ENCODE measurements at regions of chr22 and their contacts with region 1.

Region 1: GRCh38 chr22:23402275-23403151 is 177.6 kb downstream of the IGLL1 start:
- DNase-seq: peak; percentile 52 to 59 (median 57)
- ATAC-seq: peak; percentile 62 to 77 (median 74)
- H3K4me3 ChIP-seq: peak overlapping the region; percentile 14 to 33 (median 18)
- H3K27ac ChIP-seq: no peak overlapping the region
- H3K4me1 ChIP-seq: no peaks in the 10 kb centered on the region
- H3K27me3 ChIP-seq: no peaks in the 10 kb centered on the region
- CTCF ChIP-seq: peak; percentile 20 to 55 (median 42)
- POLR2A ChIP-seq: no peak

Region 2: DNA sequence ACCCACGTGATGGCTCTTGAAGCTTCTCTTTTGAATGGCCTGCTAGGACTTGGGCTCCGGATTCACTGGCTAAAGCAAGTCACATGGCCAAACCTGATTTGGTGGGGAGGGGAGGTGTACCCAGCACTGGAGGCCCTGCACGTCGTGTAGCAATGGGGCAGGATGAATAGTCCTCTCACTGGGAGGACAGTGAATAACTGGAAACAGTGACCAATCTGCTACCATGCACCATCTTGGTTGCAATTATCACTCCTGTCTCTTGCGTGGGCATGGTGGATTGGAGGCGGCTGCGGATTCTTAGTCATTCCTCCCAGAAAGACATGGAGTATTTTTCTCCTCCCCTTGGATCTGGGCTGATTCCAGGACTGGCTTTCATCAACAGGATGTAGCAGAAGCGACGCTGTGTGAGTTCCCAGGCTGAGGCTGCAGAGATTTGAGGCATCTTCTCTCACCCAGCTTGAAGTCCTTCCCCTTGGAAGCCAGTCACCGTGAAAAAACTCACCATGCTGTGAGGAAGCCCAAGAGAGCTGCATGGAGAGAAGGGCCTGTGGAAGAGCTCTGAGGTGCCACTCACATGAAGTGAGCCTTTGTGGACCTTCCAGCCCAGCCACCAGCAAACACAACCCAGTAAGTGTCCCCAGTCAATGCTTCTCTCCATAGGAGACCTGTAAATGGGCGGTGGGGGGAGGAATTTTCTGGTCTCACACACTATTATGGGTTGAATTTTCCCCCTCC is 107.2 kb after region 1 on chr22:
- intact Hi-C with region 1: loop called in 1 of 2 experiments (anchors 10 kb)
- DNase-seq: peak in 1 of 3 donors; percentile 23
- ATAC-seq: peak; percentile 33 to 67 (median 42)
- H3K4me3 ChIP-seq: no peak overlapping the region
- H3K27ac ChIP-seq: no peak overlapping the region
- H3K4me1 ChIP-seq: no peaks in the 10 kb centered on the region
- H3K27me3 ChIP-seq: no peaks in the 10 kb centered on the region
- CTCF ChIP-seq: no peak
- POLR2A ChIP-seq: no peak

Measured in right lobe of liver (tissue), 6 donors.